ENCODE measurements at regions of chr4 and their contacts with region 1.

Region 1: DNA sequence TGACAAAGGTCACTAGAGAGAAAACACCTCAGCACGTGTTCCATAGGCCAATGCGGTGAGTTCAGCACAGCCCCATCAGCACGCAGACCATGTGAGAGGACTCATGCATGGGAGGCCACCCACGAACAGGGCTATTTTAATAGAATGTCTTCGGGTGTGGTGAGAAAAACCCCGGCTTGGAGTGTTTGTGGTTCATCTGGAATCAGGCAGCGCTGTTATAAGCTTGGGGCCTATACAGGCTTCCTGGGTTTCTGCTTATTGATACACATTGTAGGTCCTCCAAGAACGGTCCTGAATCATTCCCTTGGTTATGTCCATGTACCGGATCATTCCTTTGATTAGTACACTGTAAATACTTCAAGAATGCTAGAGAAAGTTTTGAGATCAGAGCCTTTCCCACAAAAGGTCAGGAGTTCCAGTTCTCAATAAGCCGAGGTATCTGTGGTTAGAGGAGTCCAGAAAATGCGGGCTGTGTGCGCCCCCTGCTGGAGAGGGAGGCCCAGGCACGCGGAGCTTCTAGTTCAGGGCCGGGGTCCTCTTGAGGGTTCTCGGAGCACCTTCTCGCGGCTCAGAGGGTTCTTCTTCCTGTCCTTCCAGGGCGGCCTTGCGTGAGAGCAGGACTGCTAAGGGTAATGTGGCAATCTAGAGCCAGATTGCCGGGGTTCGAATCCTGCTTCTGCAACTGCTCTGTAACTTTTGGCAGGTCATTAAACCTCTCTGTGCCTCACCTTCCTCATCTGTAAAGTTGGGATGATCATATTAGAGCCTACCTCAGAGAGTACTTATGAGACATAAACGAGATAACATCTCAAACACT is 51.8 kb downstream of the TLR10 start:
- DNase-seq: peak; percentile 85
- H3K4me3 Mint-ChIP-seq: no peak overlapping the region
- H3K27ac Mint-ChIP-seq: no peak overlapping the region
- H3K4me1 Mint-ChIP-seq: peaks cover 25% of the 10 kb centered on the region
- H3K27me3 Mint-ChIP-seq: no peaks in the 10 kb centered on the region
- CTCF ChIP-seq: peak; percentile 83

Region 2: DNA sequence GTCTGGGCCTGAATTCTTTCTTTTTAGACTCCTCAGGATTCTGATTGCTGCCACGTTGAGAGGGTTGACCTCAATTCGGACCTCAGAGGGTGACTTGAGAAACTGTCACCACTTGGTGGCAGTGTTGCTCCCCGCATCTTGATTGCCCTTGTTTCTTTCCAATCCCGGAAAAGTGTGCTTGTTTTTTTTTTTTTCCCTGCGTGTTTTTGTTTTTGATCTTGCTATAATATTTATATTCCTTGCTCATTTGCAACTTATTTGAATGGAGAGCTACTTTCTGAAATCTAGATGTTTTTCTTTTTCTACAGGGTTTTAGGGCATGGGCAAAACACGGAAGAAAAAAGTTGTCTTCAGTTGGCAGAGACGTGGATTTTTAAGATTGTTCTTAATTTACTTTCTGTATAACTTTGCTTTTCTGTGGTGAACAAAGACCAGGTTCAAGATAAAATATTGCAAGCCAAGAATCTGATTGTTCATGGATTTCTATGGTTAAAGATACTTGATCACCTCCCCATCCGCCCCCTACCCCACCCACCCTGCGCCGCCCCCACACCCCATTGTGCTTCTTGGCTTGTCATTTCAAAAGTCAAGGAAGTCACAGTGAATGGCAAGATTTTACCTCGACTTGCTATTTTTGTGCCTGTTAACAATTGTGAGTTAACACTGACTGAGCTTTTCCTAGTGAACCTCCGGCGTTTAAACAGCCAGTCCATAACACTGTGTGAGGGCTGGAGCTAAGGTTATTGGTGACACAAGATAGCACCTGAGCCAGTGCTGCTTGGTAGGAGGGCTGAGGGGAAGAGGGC is 668.7 kb before region 1 on chr4:
- CTCF ChIA-PET with region 1: interaction called, 4 read pairs
- intact Hi-C with region 1: loop called (anchors 1 kb)
- DNase-seq: peak; percentile 67
- H3K4me3 Mint-ChIP-seq: peak overlapping the region; percentile 35
- H3K27ac Mint-ChIP-seq: peak overlapping the region; percentile 38
- H3K4me1 Mint-ChIP-seq: peaks cover 8% of the 10 kb centered on the region
- H3K27me3 Mint-ChIP-seq: no peaks in the 10 kb centered on the region
- CTCF ChIP-seq: peak; percentile 73

Region 3: GRCh38 chr4:38078590-38079421 is 652.2 kb before region 1 on chr4:
- CTCF ChIA-PET with region 1: no interaction called
- intact Hi-C with region 1: loop called (anchors 5 kb)
- DNase-seq: no peak
- H3K4me3 Mint-ChIP-seq: no peak overlapping the region
- H3K27ac Mint-ChIP-seq: peak overlapping the region; percentile 65
- H3K4me1 Mint-ChIP-seq: peaks cover 23% of the 10 kb centered on the region
- H3K27me3 Mint-ChIP-seq: no peaks in the 10 kb centered on the region
- CTCF ChIP-seq: no peak

Region 4: DNA sequence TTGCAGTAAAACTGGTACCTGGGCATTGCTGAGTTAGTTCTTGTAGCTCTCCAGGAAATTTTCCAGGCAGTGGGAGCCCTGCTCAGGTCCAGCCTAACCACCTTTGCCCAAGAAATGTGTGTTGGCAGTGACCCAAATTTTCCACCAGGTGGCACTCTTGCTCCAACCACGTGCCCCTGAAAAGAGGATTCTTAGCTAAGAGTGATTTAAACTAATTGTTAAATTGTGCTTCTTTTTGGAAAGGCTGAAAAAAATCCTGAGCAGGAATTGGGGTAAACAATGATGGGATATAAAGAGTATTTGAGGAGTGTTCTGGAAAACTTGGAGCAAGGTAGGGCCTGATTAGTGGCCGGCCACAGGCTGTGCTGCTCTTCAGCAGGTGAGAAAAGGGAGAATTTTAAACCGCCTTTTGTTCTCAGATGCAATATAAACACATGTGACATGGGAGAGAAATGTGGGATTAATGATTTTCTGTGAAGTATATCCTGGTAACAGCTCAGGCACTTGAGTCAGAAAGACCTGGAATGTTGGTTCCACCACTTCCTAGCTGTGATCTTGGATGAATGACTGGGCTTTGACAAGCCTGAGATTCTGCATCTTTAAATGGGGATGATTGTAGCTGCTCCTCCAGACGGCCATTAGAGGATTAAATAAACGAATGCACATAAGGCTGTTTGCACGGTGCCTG is 551.2 kb before region 1 on chr4:
- CTCF ChIA-PET with region 1: interaction called, 11 read pairs
- intact Hi-C with region 1: loop called (anchors 1 kb)
- DNase-seq: peak; percentile 73
- H3K4me3 Mint-ChIP-seq: peak overlapping the region; percentile 4
- H3K27ac Mint-ChIP-seq: peak overlapping the region; percentile 88
- H3K4me1 Mint-ChIP-seq: peaks cover 34% of the 10 kb centered on the region
- H3K27me3 Mint-ChIP-seq: no peaks in the 10 kb centered on the region
- CTCF ChIP-seq: peak; percentile 70

Region 5: GRCh38 chr4:38387348-38387747 is 343.7 kb before region 1 on chr4:
- CTCF ChIA-PET with region 1: interaction called, 4 read pairs
- intact Hi-C with region 1: loop called (anchors 5 kb)
- DNase-seq: peak; percentile 49
- H3K4me3 Mint-ChIP-seq: no peak overlapping the region
- H3K27ac Mint-ChIP-seq: no peak overlapping the region
- H3K4me1 Mint-ChIP-seq: peaks cover 9% of the 10 kb centered on the region
- H3K27me3 Mint-ChIP-seq: no peaks in the 10 kb centered on the region
- CTCF ChIP-seq: no peak

Region 6: DNA sequence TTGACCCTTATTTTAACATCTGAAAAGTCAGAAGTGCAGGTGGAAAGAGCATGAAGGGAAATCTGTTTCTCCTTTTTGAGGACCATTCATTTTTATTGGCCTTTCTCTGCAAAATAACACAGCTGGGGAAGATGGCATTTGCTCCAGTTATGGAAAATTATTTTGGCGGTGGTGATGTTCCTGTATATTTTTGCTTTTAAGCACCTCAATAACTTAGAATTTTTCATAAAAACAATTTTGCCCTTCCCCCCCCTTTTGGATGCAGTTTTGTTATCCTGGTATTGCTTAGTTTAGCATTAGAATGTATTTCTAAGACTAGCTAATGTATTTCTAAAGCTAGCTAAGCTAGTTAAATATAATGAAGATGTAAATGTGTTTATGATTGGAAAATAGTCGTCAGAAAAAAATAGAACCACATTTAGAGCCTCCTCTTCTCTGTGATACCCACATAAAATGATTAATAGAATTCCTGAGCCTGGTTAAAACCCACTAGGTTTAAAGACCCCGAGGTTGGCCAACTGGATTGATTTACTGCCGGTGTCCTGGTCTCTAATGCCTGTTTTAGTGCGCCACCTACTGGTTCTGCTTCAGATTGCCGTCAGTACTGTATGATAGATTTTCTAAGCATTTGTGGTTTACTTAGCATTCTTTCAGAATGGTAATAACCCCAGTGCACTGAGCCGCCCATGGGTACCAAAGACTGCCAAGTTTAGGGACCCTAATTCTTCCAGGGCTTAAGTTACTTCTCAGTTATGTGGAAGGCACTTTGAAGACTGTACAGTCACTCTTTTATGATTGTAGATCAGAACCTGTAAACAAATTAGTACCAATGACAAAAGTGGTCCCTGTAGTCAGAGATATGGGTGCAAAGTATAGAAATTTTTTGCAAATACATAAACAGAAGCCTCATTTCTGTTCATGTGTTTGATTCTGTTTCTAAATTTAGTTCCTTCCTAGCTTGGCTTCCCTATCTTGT is 55.6 kb before region 1 on chr4:
- CTCF ChIA-PET with region 1: interaction called, 3 read pairs
- intact Hi-C with region 1: loop called (anchors 2 kb)
- DNase-seq: peak; percentile 77
- H3K4me3 Mint-ChIP-seq: peak overlapping the region; percentile 55
- H3K27ac Mint-ChIP-seq: peak overlapping the region; percentile 55
- H3K4me1 Mint-ChIP-seq: peaks cover 82% of the 10 kb centered on the region
- H3K27me3 Mint-ChIP-seq: no peaks in the 10 kb centered on the region
- CTCF ChIP-seq: peak; percentile 79

Region 7: DNA sequence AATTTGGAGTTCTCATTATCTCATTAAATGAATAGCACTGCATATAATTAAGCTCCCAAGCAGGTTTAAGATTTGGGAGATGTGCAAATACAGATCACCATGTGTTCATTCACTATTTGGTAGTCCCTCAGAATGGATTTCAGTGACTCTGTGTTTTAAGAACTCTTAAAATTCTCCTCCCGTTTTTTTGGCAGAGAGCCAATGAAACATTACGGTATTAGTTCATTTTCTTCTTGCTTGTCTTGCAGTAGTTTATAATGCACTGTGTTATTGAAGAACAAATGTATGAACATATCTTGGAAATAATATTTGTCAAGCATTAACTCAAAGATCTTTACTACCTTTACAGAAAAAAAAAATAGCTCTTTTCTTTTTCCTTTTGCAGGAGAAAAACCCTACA is 34.3 kb before region 1 on chr4:
- CTCF ChIA-PET with region 1: no interaction called
- intact Hi-C with region 1: no loop called
- DNase-seq: no peak
- H3K4me3 Mint-ChIP-seq: no peak overlapping the region
- H3K27ac Mint-ChIP-seq: peak overlapping the region; percentile 47
- H3K4me1 Mint-ChIP-seq: peaks cover 19% of the 10 kb centered on the region
- H3K27me3 Mint-ChIP-seq: no peaks in the 10 kb centered on the region
- CTCF ChIP-seq: no peak

Measured in Calu3 (cell line).